Heart right ventricle (tissue), 16 donors: ENCODE measurements at regions of chr2 and their contacts with region 1.

Region 1: GRCh38 chr2:57622009-57622408 is 424.6 kb upstream of the VRK2 start:
- DNase-seq: no peak
- ATAC-seq: no peak
- H3K4me3 ChIP-seq: no peak overlapping the region
- H3K27ac ChIP-seq: no peak overlapping the region
- H3K4me1 ChIP-seq: no peaks in the 10 kb centered on the region
- H3K27me3 ChIP-seq: no peaks in the 10 kb centered on the region
- CTCF ChIP-seq: no peak

Region 2: GRCh38 chr2:56934866-56935265 is 687.1 kb before region 1 on chr2:
- intact Hi-C with region 1: no loop called
- DNase-seq: no peak
- ATAC-seq: no peak
- H3K4me3 ChIP-seq: no peak overlapping the region
- H3K27ac ChIP-seq: no peak overlapping the region
- H3K4me1 ChIP-seq: no peaks in the 10 kb centered on the region
- H3K27me3 ChIP-seq: no peaks in the 10 kb centered on the region
- CTCF ChIP-seq: no peak

Region 3: DNA sequence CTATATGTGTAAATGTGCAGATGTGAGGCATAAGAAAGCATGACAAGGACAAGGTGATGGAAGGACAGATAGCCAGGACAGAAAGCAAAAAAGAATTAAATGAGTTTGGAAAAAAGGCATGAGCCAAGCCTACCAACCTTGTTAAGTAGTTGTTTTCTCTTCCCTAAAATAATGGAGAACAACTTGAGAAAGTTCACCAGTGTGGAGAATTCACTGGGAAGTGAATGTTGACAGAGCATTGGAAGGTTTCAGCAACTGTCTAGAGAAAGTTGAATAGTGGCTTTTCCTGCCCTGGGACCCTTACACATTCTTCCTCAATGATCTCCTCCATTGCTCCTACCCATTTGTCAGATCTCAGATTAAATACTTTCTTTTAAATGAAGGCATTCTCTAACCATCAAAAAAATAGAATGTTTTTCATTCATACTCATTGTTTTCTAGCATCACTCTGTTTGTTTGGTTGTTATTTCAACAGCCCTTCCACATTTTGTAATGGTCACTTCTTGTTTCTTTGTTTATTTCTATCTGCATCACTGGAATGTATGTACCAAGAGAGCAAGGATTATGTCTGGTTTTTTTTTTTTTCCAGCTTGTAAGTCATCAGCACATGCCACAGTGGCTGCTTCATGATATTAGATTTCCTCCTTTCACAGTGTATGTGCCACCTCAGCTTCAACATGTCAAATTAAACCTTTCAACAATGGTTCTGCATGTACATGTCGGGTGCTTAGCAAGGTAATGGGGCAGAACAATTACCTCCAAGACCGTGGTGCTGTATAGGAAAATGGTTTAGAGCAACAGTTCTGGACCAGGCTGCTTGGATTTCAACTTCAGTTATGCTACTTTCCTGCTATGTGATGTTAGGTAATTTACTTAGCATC is 161.4 kb before region 1 on chr2:
- intact Hi-C with region 1: no loop called
- DNase-seq: no peak
- ATAC-seq: no peak
- H3K4me3 ChIP-seq: no peak overlapping the region
- H3K27ac ChIP-seq: no peak overlapping the region
- H3K4me1 ChIP-seq: no peaks in the 10 kb centered on the region
- H3K27me3 ChIP-seq: no peaks in the 10 kb centered on the region
- CTCF ChIP-seq: no peak

Region 4: DNA sequence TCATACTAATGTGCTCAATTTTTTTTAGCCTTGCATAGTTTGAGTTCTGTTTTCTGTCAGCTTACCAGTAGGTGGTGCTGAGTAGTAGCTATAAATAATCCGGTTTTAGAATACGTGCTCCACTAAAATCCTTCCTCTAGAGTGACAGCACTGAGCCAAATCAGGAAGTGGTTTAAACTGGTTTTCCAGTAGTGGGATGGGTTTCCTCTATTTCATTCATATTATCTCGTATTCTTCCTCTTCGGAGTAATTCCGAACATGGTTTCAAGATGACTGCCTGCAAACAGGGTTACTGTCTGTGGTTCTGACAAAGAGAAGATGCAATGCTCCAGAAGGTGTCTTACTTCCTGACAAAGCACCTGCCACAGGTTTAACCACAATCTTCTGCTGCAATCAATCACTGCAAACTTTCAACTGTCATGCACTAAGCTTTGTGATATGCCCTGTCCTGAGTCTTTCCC is 72.3 kb before region 1 on chr2:
- intact Hi-C with region 1: no loop called
- DNase-seq: no peak
- ATAC-seq: no peak
- H3K4me3 ChIP-seq: no peak overlapping the region
- H3K27ac ChIP-seq: no peak overlapping the region
- H3K4me1 ChIP-seq: no peaks in the 10 kb centered on the region
- H3K27me3 ChIP-seq: no peaks in the 10 kb centered on the region
- CTCF ChIP-seq: peak in 4 of 9 donors; percentile 14 to 40 (median 19)

Region 5: DNA sequence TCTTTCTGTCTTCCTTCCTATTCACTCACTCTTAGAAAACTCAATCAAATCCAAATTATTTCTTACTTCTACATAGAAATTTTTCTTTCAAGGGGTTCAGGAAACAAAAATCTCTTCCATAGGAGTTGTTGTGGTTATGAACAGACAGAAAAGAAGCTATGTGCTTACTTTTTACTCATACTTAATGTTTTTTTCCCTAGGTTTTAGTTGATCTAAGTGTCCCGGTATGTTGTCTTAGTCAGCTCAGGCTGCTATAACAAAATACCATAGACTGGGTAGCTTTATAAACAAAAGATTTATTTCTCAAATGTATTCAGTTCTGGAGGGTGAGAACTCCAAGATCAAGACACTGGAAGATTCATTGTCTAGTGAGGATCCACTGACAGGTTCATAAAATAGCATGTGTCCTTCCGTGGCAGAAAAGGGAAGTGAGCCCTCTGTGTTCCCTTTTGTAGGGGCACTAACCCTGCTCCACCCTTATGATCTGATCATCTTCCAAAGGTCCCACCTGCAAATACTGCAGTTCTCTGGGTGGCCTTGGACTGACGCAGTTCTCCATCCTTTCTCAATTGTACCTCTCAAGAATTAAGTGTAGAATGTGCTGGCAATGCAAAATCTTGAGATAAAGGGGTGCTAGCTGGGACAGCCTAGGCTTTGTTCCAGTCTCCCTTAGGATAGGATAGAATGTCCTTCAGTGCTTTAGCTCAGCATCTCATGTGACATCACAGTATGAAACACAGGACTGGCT is 410.2 kb after region 1 on chr2:
- intact Hi-C with region 1: no loop called
- DNase-seq: no peak
- ATAC-seq: peak in 1 of 8 donors; percentile 22
- H3K4me3 ChIP-seq: no peak overlapping the region
- H3K27ac ChIP-seq: no peak overlapping the region
- H3K4me1 ChIP-seq: no peaks in the 10 kb centered on the region
- H3K27me3 ChIP-seq: no peaks in the 10 kb centered on the region
- CTCF ChIP-seq: no peak

Region 6: DNA sequence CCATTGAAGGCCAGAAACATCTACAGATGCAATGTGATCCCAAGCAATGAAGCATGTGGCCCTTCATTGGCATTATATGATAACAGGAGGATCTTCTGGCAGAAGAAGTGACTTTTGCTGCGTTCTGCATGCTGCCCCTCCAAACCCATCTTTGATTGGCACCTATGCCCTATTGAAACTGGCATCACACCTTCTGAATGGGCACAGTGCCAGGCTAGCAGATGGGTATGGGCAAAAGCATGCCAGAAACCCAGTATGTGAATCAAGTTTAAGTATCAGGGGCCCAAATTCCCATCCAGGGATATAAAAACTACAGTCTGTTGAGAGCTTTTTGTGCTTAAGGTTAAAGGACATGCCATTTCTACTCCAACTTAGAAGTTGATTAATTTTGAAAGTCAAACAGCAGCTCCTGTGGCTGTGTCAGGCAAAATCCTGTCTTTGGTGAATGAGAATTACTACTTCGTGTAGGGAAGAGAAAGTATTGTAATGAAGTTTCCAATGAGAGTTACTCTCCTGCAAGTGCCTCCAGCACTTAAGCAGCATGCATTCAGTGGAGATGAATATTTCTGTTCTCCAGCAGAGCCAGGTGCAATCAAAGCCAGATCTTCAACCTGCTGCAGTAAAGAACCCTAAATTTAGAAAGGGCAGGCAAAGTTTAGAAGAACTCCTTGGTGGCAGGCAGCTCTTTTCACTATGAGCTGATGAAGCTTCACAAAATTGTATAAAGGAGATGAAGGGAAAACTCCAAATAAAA is 433.2 kb after region 1 on chr2:
- intact Hi-C with region 1: loop called in 1 of 10 experiments (anchors 5 kb)
- DNase-seq: no peak
- ATAC-seq: peak in 1 of 8 donors; percentile 32
- H3K4me3 ChIP-seq: no peak overlapping the region
- H3K27ac ChIP-seq: peak overlapping the region in 1 of 10 donors; percentile 67
- H3K4me1 ChIP-seq: peaks cover 0 to 27% (median 11%) of the 10 kb centered on the region in 9 donors
- H3K27me3 ChIP-seq: no peaks in the 10 kb centered on the region
- CTCF ChIP-seq: no peak